ENCODE measurements at regions of chr14 and their contacts with region 1.

Region 1: DNA sequence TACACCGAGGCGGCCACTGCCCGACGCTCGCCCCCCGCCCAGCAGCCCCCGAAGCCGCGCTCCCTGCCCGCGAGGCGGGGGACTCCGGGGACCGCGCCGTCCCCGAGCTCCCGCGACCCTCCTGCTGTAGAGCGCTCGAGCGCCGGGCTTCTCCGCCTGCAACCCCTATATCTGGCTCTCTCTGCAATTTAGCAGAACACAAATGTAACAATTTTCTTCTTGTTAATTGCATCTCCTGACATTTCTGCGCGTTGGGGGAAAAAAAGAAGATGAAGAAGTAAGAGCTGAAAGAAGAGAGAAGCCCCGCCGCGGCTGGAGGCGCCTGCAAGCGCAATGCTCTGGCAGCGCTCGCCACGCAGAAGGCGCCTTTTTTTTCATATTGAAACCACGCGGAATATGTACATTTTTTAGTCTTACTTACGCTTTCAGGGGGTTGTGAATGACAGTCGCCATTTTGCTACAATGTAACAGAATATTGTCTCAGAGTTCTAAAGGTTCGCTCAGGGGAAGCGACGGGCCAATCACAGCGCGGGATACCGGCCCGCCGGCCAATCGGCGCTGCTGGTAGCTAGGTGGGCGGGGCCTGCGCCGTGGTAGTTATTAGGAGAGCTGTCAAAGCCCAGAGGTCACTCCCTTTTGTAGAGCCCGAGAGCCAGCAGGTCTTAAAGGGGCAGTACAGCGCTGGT is at the start of gene DPF3:
- DNase-seq: peak; percentile 98
- ATAC-seq: peak; percentile 94
- total RNA-seq, gene DPF3: 25.0 TPM

Region 2: DNA sequence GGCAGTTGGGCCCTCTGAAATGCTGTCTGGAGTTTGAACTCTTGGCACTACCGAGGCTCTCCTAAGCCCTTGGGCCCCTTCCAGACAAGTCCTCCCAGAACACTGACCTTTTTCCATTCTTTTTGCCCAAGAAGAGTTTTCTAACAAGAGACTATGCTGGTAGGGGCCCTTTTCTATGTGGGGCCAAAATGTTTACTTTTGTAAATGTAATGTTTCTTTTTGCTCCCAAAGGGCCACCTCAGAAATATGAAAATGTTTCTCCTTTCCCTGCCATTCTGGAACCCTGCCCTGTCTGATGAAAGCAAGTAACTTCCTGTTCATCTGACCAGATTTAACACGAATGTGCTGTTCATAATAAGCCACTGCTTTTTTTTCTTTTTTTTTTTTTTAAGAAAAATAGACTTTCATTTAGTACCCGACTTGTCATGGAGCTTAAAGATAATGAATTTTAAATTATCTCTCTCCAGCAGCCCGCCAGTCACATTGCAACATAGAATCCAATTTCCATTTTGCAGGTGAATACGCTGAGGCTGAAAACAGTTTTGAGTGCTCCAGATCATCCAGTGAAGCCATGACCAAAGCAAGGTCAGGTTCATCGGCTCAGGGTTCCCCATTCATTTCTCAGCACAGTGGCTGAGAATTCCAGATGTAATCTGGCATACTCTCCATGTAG is 169.8 kb before region 1 on chr14:
- intact Hi-C with region 1: loop called (anchors 10 kb)
- DNase-seq: no peak
- ATAC-seq: peak; percentile 26

Region 3: GRCh38 chr14:72812292-72812911 is 81.4 kb before region 1 on chr14:
- intact Hi-C with region 1: loop called (anchors 2 kb)
- DNase-seq: peak; percentile 83
- ATAC-seq: peak; percentile 91

Measured in Right ventricle myocardium superior (tissue), 1 donor.